Transverse colon (tissue), 4 donors: ENCODE measurements at regions of chr2 and their contacts with region 1.

Region 1: DNA sequence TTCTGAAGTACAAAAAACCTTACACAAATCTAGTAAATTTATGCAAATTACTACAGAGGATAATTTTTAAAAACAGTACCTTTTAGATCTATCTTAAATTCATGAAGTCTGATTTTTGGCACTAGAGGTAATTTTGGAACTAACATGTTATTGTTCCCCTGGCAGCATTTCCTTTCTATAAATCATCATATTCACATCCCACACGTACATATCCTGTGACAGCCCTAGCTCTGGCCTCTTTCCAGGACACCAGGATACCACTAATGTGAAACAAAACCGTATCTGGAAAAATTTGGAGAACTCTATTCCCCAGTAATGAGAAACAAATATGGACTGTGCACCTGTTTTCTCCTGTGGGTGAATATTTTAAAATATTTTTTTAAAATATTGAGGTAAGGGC is 14.0 kb upstream of the BIRC6 start:
- DNase-seq: no peak
- H3K4me3 ChIP-seq: no peak overlapping the region
- H3K27ac ChIP-seq: no peak overlapping the region
- H3K4me1 ChIP-seq: peaks cover 0 to 10% (median 4%) of the 10 kb centered on the region in 4 donors
- H3K27me3 ChIP-seq: no peaks in the 10 kb centered on the region
- CTCF ChIP-seq: no peak
- EP300 ChIP-seq: no peak
- POLR2A ChIP-seq: no peak

Region 2: GRCh38 chr2:31654241-31654640 is 688.6 kb before region 1 on chr2:
- in situ Hi-C with region 1: no loop called
- intact Hi-C with region 1: loop called (anchors 5 kb)
- DNase-seq: no peak
- H3K4me3 ChIP-seq: no peak overlapping the region
- H3K27ac ChIP-seq: no peak overlapping the region
- H3K4me1 ChIP-seq: no peaks in the 10 kb centered on the region
- H3K27me3 ChIP-seq: no peaks in the 10 kb centered on the region
- CTCF ChIP-seq: no peak
- EP300 ChIP-seq: no peak
- POLR2A ChIP-seq: no peak

Region 3: DNA sequence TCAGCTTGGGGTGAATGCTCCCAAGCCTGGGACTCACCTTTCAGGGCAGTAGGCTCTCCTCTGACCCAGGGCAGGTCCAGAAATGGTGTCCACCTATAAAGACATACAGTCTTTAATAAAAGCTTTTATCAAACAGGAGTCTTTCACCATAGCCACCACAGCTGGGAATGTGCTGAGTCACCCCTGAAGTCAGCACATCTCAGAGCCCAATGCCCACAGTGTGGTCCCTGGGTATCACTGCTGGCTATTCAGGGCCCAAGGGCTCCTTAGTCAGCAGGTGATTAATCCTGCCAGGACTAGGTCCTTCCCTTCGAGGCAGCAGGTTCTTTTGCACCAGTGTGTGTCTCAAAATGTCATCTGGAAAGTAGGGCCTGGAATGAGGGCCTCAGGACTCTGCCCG is 513.9 kb before region 1 on chr2:
- in situ Hi-C with region 1: no loop called
- intact Hi-C with region 1: no loop called
- DNase-seq: no peak
- H3K4me3 ChIP-seq: no peak overlapping the region
- H3K27ac ChIP-seq: no peak overlapping the region
- H3K4me1 ChIP-seq: no peaks in the 10 kb centered on the region
- H3K27me3 ChIP-seq: peaks cover 3% of the 10 kb centered on the region
- CTCF ChIP-seq: no peak
- EP300 ChIP-seq: no peak
- POLR2A ChIP-seq: no peak